ENCODE measurements at regions of chr5 and their contacts with region 1.

Region 1: DNA sequence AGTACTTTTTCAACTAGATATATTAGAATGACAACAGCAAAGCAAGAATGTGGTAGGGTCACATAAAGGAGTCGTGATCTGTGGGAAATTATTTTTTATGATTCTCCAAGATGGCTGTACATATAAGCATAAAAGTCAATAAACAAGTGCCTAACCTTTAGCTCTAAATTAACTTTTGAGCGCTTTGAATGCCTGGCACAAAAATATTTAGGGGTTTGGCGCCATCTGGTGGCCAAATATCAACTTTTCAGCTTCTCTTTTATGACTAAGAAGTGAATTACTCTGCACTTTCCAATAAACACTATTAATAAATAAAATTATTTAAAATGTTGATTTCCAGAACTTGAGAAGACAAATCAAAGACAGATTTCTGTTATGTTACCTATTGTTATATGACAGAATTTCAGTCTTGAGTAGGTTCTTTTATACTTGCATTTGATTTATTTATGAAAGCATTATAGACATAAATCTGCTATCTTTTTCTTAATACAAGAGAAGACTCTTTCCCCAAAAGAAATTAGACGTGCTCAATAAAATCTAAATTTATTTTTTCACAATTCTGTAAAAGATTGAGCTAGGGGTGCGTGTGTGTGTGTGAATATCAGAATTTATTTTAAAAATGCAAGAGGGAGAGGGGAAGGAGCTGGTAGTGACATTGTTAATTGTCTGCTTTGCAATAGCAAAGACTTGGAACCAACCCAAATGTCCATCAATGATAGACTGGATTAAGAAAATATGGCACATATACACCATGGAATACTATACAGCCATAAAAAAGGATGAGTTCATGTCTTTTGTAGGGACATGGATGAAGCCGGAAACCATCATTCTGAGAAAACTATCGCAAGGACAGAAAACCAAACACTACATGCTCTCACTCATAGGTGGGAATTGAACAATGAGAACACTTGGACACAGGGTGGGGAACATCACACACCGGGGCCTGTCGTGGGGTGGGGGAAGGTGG is 36.7 kb upstream of the ARRDC3 start:
- DNase-seq: peak; percentile 43 to 54
- H3K4me3 ChIP-seq: no peak overlapping the region
- H3K4me3 Mint-ChIP-seq: no peak overlapping the region
- H3K27ac Mint-ChIP-seq: no peak overlapping the region
- H3K4me1 ChIP-seq: no peaks in the 10 kb centered on the region
- H3K4me1 Mint-ChIP-seq: peaks cover 7% of the 10 kb centered on the region
- H3K27me3 ChIP-seq: no peaks in the 10 kb centered on the region
- H3K27me3 Mint-ChIP-seq: no peaks in the 10 kb centered on the region
- CTCF ChIP-seq: peak; percentile 58 to 76

Region 2: DNA sequence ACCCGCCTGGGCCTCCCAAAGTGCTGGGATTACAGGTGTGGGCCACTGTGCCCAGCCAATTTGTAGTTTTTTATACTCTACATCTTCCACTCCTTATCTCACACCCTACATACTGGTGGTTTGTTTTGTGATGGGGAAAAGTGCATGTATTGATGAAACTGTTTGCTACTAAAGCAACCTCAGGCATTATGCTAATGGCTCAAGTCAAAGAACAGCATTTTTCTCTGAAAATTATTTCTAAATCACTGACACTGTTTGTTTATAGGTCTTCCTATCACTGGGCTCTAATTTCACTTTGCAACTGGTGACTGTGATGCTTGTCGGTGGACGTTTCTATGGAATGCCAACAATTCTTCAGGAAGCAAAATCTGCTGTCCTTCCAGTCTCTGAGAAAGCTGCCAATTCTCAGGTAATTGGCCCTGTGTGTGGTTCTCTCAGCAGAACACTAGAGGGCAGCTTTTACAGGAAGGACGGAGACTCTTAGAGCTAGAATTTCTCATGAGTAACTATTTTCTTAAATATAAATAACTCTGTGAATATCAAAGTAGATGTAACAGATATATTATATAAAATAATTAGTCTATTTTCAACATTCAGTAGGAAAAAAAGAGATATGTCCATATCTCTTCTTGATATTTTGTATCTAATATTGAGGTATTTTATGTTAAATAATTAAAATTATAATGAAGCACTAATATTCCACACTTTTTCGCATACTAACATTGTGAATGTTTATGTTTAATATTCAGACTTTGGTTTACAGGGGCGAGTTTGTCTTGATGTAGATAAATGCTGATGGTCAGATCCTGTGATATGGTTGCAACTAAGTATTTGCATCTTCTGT is 617.2 kb before region 1 on chr5:
- CTCF ChIA-PET with region 1: interaction called, 13 read pairs
- POLR2A ChIA-PET with region 1: no interaction called
- intact Hi-C with region 1: loop called (anchors 1 kb)
- DNase-seq: peak; percentile 53 to 54
- H3K4me3 ChIP-seq: no peak overlapping the region
- H3K4me3 Mint-ChIP-seq: no peak overlapping the region
- H3K27ac Mint-ChIP-seq: no peak overlapping the region
- H3K4me1 ChIP-seq: no peaks in the 10 kb centered on the region
- H3K4me1 Mint-ChIP-seq: no peaks in the 10 kb centered on the region
- H3K27me3 ChIP-seq: no peaks in the 10 kb centered on the region
- H3K27me3 Mint-ChIP-seq: no peaks in the 10 kb centered on the region
- CTCF ChIP-seq: peak; percentile 75 to 86

Region 3: GRCh38 chr5:90866333-90866732 is 553.5 kb before region 1 on chr5:
- CTCF ChIA-PET with region 1: interaction called, 10 read pairs
- POLR2A ChIA-PET with region 1: no interaction called
- intact Hi-C with region 1: loop called (anchors 1 kb)
- DNase-seq: no peak
- H3K4me3 ChIP-seq: no peak overlapping the region
- H3K4me3 Mint-ChIP-seq: no peak overlapping the region
- H3K27ac Mint-ChIP-seq: no peak overlapping the region
- H3K4me1 ChIP-seq: peaks cover 25% of the 10 kb centered on the region
- H3K4me1 Mint-ChIP-seq: peaks cover 14% of the 10 kb centered on the region
- H3K27me3 ChIP-seq: no peaks in the 10 kb centered on the region
- H3K27me3 Mint-ChIP-seq: no peaks in the 10 kb centered on the region
- CTCF ChIP-seq: peak; percentile 34 to 42

Region 4: DNA sequence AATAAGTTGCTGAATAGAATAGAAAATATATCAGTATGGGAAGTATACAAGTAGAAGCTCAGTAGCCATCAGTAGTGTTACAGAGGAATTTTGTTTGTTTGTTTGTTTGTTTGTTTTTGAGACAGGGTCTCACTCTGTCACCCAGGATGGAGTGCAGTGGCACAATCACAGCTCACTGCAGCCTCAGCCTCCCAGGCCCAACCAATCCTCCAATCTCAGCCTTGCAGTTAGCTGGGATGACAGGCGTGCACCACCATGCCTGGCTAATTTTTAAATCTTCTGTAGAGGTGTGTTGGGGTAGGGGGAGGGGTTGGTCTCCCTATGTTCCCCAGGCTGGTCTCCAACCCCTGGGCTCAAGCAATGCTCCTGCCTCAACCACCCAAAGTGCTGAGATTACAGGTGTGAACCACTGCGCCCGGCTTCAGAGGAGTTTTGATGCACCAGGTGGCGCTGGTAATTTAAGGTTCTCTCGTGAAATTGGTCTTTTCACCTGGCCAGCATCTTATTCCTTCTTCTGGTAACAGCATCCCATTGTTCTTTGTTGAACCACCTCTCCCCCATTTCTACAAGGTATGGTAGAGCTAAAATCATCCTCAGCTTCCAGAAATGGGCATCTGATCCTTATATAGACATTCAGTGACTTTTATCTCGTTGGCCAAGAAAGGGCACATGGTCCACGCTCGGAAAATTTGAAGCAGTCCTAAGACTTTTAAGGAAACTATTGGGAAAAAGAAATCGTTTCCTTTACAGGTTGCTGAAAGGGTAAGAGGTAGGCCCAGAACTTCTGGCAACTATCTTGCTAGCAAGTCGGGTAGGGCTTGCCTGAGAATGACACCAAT is 193.8 kb before region 1 on chr5:
- CTCF ChIA-PET with region 1: interaction called, 7 read pairs
- POLR2A ChIA-PET with region 1: no interaction called
- intact Hi-C with region 1: loop called (anchors 1 kb)
- DNase-seq: peak; percentile 61 to 72
- H3K4me3 ChIP-seq: no peak overlapping the region
- H3K4me3 Mint-ChIP-seq: no peak overlapping the region
- H3K27ac Mint-ChIP-seq: no peak overlapping the region
- H3K4me1 ChIP-seq: peaks cover 10% of the 10 kb centered on the region
- H3K4me1 Mint-ChIP-seq: peaks cover 9% of the 10 kb centered on the region
- H3K27me3 ChIP-seq: no peaks in the 10 kb centered on the region
- H3K27me3 Mint-ChIP-seq: no peaks in the 10 kb centered on the region
- CTCF ChIP-seq: peak; percentile 56 to 64

Region 5: DNA sequence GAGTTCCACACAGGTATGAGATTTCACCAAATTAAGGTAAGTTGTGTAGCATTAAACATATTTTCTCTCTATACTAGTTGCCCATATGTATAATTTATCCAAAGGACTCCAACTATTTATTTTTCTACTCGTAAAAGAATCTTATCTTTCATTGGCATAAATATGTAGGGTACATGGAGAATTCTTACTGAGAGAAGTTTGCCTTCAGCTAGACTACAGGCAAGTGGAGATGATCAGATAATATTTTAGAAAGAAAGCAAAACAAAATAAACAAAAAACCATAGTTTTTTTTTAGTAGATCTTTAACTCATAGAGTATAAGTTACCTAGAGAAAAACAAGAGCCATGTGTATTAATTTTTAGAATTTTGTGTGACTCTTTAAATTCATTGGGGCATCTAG is 706.3 kb after region 1 on chr5:
- CTCF ChIA-PET with region 1: no interaction called
- POLR2A ChIA-PET with region 1: no interaction called
- intact Hi-C with region 1: no loop called
- DNase-seq: no peak
- H3K4me3 ChIP-seq: no peak overlapping the region
- H3K4me3 Mint-ChIP-seq: no peak overlapping the region
- H3K27ac Mint-ChIP-seq: no peak overlapping the region
- H3K4me1 ChIP-seq: no peaks in the 10 kb centered on the region
- H3K4me1 Mint-ChIP-seq: no peaks in the 10 kb centered on the region
- H3K27me3 ChIP-seq: no peaks in the 10 kb centered on the region
- H3K27me3 Mint-ChIP-seq: no peaks in the 10 kb centered on the region
- CTCF ChIP-seq: no peak

Measured in Caco-2 (cell line).